A549 (cell line): ENCODE measurements at regions of chr9 and their contacts with region 1.

Region 1: DNA sequence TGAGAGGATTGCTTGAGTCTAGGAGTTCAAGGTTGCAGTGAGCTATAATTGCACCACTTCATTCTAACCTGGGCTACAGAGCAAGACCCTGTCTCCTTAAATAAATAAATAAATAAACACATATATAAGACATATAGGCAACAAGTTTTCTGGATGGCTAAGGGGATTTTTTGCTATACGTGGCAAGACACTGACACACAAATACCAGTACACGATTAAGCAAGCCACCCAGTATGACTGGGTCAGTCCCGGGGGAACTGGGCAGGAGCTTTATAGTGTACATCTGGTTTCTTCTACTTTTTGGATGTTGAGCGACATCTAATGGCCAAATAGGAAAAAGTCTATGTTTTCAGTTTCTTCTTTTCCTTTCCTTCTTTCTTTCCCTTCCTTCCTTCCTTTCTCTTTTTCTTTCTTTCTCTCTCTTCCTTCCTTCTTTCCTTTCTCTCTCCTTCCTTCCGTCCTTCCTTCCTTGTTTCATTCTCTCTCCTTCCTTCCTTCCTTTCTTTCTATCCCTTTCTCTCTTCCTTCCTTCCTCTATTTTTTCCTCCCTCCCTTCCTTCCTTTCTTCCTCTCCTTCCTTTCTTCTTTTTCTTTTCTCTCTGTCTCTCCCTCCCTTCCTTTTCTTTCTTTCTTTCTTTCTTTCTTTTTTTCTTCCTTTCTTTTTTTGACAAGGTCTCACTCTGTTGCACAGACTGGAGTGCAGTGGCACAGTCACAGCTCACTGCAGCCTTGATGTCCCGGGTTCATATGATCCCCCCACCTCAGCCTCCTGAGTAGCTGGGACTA is 47.0 kb upstream of the PLIN2 start:
- DNase-seq: peak; percentile 63 to 66
- ATAC-seq: peak; percentile 93 to 96
- H3K4me3 ChIP-seq: no peak overlapping the region
- H3K27ac ChIP-seq: peak overlapping the region; percentile 65 to 66; a peak in 5 of 6 replicates
- H3K4me1 ChIP-seq: peaks cover 33% of the 10 kb centered on the region; the same call in 2 of the 3 replicates
- CTCF ChIP-seq: peak; percentile 84
- EP300 ChIP-seq: no peak
- POLR2A ChIP-seq: no peak
- RAD21 ChIP-seq: peak; percentile 79 to 90

Region 2: DNA sequence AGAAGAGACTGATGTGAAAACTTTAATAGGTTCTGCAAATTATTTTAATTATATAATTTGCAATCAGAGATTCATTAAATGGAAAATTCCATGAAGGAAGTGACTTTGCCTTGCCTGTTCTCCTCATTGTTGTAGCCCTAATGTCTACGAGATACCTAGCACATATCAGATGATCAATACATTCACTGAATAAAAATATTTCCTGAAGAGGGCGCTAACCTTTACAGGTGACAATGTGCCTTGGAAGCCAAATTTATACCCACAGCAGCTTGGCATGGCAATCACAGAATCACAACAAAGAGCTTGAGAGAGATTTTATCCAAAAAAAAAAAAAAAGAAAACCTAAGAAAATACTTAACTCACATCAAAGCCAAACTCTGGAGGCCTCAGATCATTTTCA is 89.0 kb before region 1 on chr9:
- CTCF ChIA-PET with region 1: interaction called, 18 read pairs
- POLR2A ChIA-PET with region 1: no interaction called
- DNase-seq: peak; percentile 23 to 37
- ATAC-seq: peak in 1 of 2 experiments; percentile 70; a peak in 2 of 6 replicates
- H3K4me3 ChIP-seq: no peak overlapping the region
- H3K27ac ChIP-seq: no peak overlapping the region
- H3K4me1 ChIP-seq: peaks cover 10% of the 10 kb centered on the region; the same call in 2 of the 3 replicates
- CTCF ChIP-seq: peak; percentile 50
- EP300 ChIP-seq: no peak
- POLR2A ChIP-seq: no peak
- RAD21 ChIP-seq: peak; percentile 20 to 38; a peak in 1 of 5 replicates

Region 3: GRCh38 chr9:19133549-19134345 is 40.6 kb before region 1 on chr9:
- CTCF ChIA-PET with region 1: interaction called, 13 read pairs
- POLR2A ChIA-PET with region 1: no interaction called
- DNase-seq: no peak
- ATAC-seq: no peak
- H3K4me3 ChIP-seq: no peak overlapping the region
- H3K27ac ChIP-seq: no peak overlapping the region
- H3K4me1 ChIP-seq: peaks cover 8% of the 10 kb centered on the region; the same call in 2 of the 3 replicates
- CTCF ChIP-seq: no peak
- EP300 ChIP-seq: no peak
- POLR2A ChIP-seq: no peak
- RAD21 ChIP-seq: no peak

Region 4: DNA sequence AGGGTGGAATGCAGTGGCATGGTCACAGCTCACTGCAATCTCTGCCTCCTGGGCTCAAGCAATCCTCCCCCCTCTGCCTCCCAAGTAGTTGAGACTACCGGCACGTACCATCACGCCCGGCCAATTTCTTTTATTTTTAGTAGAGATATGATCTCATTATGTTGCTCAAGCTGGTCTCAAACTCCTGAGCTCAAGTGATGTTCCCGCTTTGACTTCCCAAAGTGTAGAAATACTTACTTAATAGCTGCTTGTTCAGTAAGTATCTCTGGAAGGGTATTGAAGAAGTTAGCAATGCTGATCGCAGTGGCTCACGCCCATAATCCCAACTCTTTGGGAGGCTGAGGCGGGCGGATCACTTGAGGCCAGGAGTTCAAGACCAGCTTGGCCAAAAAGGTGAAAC is 11.4 kb before region 1 on chr9:
- CTCF ChIA-PET with region 1: interaction called, 10 read pairs
- POLR2A ChIA-PET with region 1: interaction called, 3 read pairs
- DNase-seq: peak in 1 of 2 experiments; percentile 61
- ATAC-seq: peak; percentile 45 to 47; a peak in 5 of 6 replicates
- H3K4me3 ChIP-seq: no peak overlapping the region
- H3K27ac ChIP-seq: peak overlapping the region; percentile 84 to 86
- H3K4me1 ChIP-seq: peaks cover 28% of the 10 kb centered on the region
- CTCF ChIP-seq: no peak
- EP300 ChIP-seq: peak; percentile 68 to 72; a peak in 2 of 5 replicates
- POLR2A ChIP-seq: no peak
- RAD21 ChIP-seq: no peak

Region 5: DNA sequence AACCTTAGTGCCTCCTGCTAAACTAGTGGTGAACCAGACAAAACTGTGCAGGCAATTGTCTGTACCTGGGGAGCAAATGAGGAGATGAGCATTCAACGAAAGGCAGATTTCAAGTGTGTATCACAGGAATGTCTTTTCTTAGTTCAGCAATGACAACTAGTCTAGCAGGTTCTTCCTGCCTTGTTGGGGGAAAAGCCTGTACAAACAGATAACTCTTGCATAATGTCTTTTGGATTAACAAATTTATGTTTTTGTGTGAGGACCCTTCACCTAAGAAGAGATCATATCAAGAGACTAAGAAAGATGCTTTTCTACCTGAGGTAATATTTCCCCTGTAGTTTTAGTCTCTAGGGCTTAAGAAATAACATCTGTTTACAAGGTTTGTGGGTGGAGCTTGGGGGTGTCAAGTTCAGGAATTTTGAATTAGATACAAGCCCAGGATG is 34.4 kb after region 1 on chr9:
- CTCF ChIA-PET with region 1: no interaction called
- POLR2A ChIA-PET with region 1: no interaction called
- DNase-seq: no peak
- ATAC-seq: no peak
- H3K4me3 ChIP-seq: no peak overlapping the region
- H3K27ac ChIP-seq: no peak overlapping the region
- H3K4me1 ChIP-seq: no peaks in the 10 kb centered on the region
- CTCF ChIP-seq: no peak
- EP300 ChIP-seq: no peak
- POLR2A ChIP-seq: no peak
- RAD21 ChIP-seq: no peak